HEK293T (cell line): ENCODE measurements at regions of chr17 and their contacts with region 1.

Region 1: DNA sequence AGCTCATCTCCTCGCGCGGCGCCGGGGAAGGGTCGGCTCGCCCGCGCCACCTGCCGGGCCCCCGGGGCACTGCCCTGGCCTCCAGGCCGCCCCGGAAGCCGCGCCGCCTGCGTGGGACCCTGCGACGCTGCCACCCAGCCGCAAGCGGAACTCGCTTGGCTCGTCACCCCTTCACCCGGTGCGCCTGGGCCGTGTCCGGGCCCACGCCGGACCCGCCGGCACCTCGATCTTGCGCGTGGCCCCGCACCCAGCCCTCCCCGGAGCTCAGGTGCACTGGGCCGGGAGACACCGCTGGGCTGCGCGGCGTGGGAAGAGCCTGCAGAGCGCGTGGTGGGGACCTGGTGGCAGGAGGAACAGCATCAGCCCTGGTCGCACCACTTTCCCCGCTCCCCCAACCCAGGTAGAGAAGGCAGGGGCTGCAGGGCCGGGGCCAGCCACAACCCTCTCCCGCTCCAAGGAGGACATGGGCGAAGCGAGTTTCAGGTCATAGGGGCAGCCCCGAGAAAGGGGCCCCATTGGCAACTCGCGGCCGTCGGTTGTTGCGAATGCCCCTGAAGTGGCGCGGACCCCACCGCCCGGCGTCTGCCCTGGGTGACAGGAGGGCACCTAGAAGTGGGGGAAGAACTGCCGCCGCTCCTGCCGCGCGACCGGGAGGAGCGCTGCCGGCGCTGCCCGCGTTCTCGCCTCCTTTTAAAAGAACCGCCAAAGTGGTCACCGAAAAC is 363 bp upstream of the MIF4GD start:
- DNase-seq: peak; percentile 95

Region 2: DNA sequence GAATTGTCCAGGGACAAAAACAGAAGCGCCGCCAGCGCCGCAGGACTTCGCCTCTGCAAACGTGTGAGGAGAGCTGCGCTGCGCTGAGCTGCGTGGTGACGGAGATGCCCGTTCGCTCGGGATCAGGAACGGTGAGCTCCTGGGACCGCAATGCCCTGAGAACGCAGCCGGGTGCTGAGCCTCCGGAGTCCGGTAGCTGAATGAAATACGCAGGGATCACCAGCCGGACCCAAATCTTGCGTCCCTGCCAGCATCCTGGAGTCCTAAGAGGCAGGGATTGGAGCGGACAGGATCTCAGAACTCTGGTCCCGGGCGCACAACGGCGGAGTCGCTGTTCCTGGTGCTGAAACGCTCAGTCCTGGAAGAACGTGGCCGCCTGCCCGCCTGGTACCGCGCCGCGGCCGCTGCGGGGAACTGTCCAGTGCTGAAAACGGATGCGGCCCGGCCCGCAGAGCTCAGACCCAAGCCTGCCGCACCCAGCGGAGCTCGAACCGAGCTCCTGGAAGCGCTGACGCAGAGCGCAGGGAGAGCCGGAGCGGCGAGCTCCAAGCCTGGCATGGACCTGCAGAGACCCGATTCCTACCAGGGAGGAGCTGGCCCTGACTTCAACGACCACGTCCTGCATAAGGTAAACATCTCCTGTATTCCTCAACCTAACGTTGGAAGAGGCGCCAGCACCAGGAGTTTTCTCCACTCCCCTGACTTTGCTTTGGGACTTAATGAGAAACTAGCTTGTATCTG is 600.2 kb before region 1 on chr17:
- CTCF ChIA-PET with region 1: no interaction called
- POLR2A ChIA-PET with region 1: no interaction called
- DNase-seq: peak; percentile 89

Region 3: GRCh38 chr17:75163074-75163473 is 108.3 kb before region 1 on chr17:
- CTCF ChIA-PET with region 1: no interaction called
- POLR2A ChIA-PET with region 1: no interaction called
- DNase-seq: no peak

Region 4: DNA sequence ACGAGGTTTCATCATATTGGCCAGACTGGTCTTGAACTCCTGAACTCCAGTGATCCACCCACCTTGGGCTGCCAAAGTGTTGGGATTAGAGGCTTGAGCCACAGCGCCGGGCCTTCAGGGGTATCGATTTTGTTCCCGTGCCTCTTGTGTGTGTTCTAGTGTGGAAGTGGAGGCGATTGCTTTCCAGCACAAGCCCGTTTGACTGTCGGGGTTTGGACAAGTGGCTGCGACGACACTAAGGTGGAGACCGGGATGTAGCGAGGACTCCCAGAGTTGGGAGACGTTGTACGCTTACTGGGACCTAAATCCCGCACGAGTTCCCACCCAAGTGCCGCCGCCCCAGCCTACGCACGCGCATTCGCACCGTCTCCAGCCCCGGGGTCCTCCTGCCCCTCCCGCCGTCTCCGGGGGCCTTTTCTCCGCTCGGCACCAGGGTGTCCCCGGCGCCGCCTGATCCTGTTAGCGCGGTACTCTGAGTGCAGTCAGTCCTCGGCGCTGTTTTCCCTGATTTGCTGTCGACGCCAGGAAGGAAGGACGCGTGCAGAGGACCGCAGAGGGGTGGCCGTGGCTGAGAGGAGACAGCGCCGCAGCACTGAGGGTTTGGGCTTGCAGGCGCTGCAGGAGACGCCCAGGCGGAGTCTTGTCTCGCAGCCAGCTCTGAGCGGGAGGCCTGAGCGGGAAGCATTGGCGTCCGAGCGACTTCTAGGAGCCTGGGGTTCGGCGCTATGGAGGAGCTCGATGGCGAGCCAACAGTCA is 66.2 kb before region 1 on chr17 and contains the start of gene NUP85:
- CTCF ChIA-PET with region 1: interaction called, 4 read pairs
- POLR2A ChIA-PET with region 1: interaction called, 11 read pairs
- DNase-seq: peak; percentile 99

Region 5: DNA sequence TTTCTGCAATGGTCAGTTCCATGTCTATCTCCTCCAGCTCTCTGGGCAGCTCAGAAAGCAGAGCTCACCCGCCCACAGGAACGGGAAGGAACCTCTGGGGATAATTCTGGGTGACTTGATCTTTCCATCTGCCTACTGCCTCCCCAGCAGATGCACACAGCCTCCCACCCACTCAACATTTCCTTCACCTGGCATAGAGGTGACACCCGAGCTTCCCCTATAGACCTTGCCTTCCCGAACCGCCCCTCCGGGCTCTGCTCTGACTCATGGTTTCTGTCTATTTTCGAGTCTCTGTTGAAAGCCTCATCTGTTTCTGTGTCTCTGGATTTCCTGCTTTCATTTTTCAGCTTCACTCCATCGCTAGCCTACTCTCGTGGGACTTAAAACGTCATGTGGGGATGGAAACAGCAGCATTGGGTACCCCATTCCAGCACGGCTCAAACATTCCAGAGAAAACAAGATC is 21.4 kb before region 1 on chr17:
- CTCF ChIA-PET with region 1: interaction called, 5 read pairs
- POLR2A ChIA-PET with region 1: interaction called, 21 read pairs
- DNase-seq: no peak

Region 6: GRCh38 chr17:75315541-75316243 is 44.3 kb after region 1 on chr17:
- CTCF ChIA-PET with region 1: interaction called, 7 read pairs
- POLR2A ChIA-PET with region 1: interaction called, 11 read pairs
- DNase-seq: no peak

Region 7: DNA sequence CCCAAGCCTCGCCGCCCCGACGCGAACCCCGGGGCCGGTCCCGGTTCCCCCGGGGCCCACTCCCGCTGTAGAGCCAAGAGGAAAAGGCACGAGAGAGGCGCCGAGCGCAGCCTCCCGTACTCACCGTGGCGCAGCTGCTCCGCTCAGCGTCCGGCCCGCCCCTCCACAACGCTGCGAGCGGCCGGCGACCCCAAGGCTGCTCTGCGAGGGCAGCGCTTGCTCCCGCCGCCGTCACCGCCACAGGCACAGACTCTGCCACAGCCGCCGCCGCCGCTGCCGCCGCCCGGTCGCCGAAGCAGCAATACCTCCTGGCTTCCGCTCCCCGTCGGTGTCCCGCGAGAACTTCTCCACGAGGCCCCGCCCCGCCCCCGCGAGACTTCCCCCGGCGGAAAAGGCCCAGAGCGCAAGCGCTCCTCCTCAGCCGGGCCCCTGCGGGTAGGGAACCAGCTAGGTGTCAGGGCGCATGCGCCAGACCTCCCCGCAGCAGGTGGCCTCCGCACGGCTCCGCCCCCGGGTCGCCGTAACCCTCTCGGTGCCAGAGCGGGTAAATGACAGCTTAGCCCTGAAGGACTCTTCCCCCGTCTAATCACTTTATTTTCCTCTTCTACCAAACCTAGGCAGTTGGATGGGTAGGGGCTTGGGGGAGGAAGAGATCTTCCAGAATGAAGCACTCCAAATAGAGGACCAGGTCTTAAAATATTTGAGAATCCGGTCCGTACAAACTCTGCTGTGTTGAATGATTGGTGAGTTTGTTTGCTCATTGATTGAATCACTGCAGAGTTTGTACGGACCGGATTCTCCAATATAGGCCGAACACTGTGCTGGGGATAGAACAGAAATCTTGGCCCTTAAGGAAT is 134.2 kb after region 1 on chr17 and contains the start of gene GRB2:
- CTCF ChIA-PET with region 1: interaction called, 9 read pairs
- POLR2A ChIA-PET with region 1: interaction called, 25 read pairs
- DNase-seq: peak; percentile 99

Region 8: DNA sequence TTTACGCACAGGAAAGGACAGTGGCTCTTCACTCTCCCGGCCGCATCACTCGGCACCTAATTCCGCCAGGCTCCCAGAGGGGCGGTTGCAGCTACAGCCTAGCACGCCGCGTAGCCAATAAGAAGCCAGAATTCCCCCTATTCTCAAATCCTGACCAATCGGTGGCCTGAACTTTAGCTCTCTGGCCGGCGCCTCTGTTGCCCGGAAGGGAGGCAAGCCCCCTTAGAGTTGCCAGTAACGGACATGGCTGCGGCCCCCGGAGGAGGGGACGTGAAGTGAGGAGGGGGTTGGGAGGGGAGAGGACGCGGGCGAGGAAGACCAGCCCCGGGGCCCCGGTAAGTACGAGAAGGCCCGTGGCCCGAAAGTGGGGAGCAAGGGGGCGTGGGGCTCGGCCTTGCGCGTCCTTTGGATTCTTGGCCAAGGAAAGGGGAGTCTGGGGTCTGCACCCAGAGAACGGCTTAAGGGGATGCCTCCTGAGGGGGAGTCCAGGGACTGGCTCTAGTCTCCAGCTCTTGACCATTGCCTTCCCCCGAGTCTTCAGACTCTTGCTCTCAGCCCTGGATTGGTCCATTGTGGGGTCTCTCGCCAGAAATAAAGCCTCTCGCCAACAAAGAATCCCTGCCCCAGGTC is 185.1 kb after region 1 on chr17 and contains the start of gene TMEM94:
- CTCF ChIA-PET with region 1: no interaction called
- POLR2A ChIA-PET with region 1: interaction called, 11 read pairs
- DNase-seq: peak; percentile 96